Natural killer cell (primary cell): ENCODE measurements at regions of chr7 and their contacts with region 1.

Region 1: GRCh38 chr7:57417731-57418130 is 32.2 kb upstream of the ZNF716 start:
- DNase-seq: no peak
- ATAC-seq: no peak
- H3K4me3 ChIP-seq: no peak overlapping the region
- H3K4me3 Mint-ChIP-seq: no peak overlapping the region
- H3K27ac ChIP-seq: no peak overlapping the region
- H3K27ac Mint-ChIP-seq: no peak overlapping the region
- H3K4me1 ChIP-seq: no peaks in the 10 kb centered on the region
- H3K4me1 Mint-ChIP-seq: no peaks in the 10 kb centered on the region
- H3K27me3 ChIP-seq: no peaks in the 10 kb centered on the region
- H3K27me3 Mint-ChIP-seq: no peaks in the 10 kb centered on the region
- CTCF ChIP-seq: no peak

Region 2: GRCh38 chr7:57404343-57404953 is 13.3 kb before region 1 on chr7:
- intact Hi-C with region 1: loop called (anchors 1 kb)
- DNase-seq: no peak
- ATAC-seq: no peak
- H3K4me3 ChIP-seq: no peak overlapping the region
- H3K4me3 Mint-ChIP-seq: no peak overlapping the region
- H3K27ac ChIP-seq: no peak overlapping the region
- H3K27ac Mint-ChIP-seq: no peak overlapping the region
- H3K4me1 ChIP-seq: no peaks in the 10 kb centered on the region
- H3K4me1 Mint-ChIP-seq: no peaks in the 10 kb centered on the region
- H3K27me3 ChIP-seq: no peaks in the 10 kb centered on the region
- H3K27me3 Mint-ChIP-seq: no peaks in the 10 kb centered on the region
- CTCF ChIP-seq: no peak

Region 3: DNA sequence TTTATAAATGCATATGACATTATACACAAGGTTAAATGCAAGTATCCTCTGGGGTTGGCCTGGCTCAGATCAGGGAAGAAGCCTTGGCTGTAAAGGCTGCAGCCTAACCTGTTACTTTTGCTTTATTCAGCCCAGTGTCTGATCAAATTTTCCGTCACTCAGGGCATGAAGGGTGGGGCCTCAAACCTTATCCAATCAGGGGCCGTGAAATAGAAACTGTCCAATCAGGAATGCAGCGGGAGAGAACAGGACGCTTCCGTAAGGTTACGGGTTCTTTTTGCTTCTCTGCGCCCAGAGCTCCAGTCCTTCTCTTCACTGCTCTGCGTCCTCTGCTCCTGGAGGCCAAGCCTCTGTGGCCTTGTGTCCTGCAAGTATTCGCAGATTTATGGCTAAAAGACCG is 32.2 kb after region 1 on chr7 and contains the start of gene ZNF716:
- intact Hi-C with region 1: no loop called
- DNase-seq: no peak
- ATAC-seq: no peak
- H3K4me3 ChIP-seq: no peak within 1 kb of the TSS
- H3K4me3 Mint-ChIP-seq: no peak within 1 kb of the TSS
- H3K27ac ChIP-seq: no peak within 1 kb of the TSS
- H3K27ac Mint-ChIP-seq: no peak within 1 kb of the TSS
- H3K4me1 ChIP-seq: no peaks in the 10 kb centered on the region
- H3K4me1 Mint-ChIP-seq: no peaks in the 10 kb centered on the region
- H3K27me3 ChIP-seq: no peaks in the 10 kb centered on the region
- H3K27me3 Mint-ChIP-seq: no peaks in the 10 kb centered on the region
- CTCF ChIP-seq: no peak
- total RNA-seq, gene ZNF716: not detected